WTC11 (cell line): ENCODE measurements at regions of chr3 and their contacts with region 1.

Region 1: GRCh38 chr3:46909535-46910442 is 32.3 kb downstream of the PTH1R start:
- DNase-seq: peak; percentile 94
- ATAC-seq: peak; percentile 87
- H3K4me3 Mint-ChIP-seq: no peak overlapping the region
- H3K27ac Mint-ChIP-seq: no peak overlapping the region
- H3K4me1 Mint-ChIP-seq: no peaks in the 10 kb centered on the region
- H3K27me3 Mint-ChIP-seq: no peaks in the 10 kb centered on the region
- CTCF ChIP-seq: peak; percentile 85

Region 2: GRCh38 chr3:46663591-46664135 is 246.1 kb before region 1 on chr3:
- CTCF ChIA-PET with region 1: interaction called, 13 read pairs
- POLR2A ChIA-PET with region 1: no interaction called
- DNase-seq: peak; percentile 58
- ATAC-seq: peak; percentile 37
- H3K4me3 Mint-ChIP-seq: no peak overlapping the region
- H3K27ac Mint-ChIP-seq: no peak overlapping the region; the same call in 1 of the 2 replicates
- H3K4me1 Mint-ChIP-seq: peaks cover 54% of the 10 kb centered on the region
- H3K27me3 Mint-ChIP-seq: no peaks in the 10 kb centered on the region; the same call in 1 of the 2 replicates
- CTCF ChIP-seq: no peak

Region 3: GRCh38 chr3:46717447-46718231 is 192.2 kb before region 1 on chr3 and contains the start of gene PRSS50:
- CTCF ChIA-PET with region 1: interaction called, 15 read pairs
- POLR2A ChIA-PET with region 1: no interaction called
- DNase-seq: peak; percentile 86
- ATAC-seq: peak; percentile 94
- H3K4me3 Mint-ChIP-seq: no peak within 1 kb of the TSS
- H3K27ac Mint-ChIP-seq: no peak within 1 kb of the TSS
- H3K4me1 Mint-ChIP-seq: no peaks in the 10 kb centered on the region
- H3K27me3 Mint-ChIP-seq: no peaks in the 10 kb centered on the region
- CTCF ChIP-seq: peak; percentile 94
- total RNA-seq, gene PRSS50: 0.70 to 1.4 TPM (median 1.2 TPM) in 3 replicates

Region 4: GRCh38 chr3:46833346-46834300 is 76.2 kb before region 1 on chr3:
- CTCF ChIA-PET with region 1: no interaction called
- POLR2A ChIA-PET with region 1: no interaction called
- DNase-seq: no peak
- ATAC-seq: no peak
- H3K4me3 Mint-ChIP-seq: no peak overlapping the region
- H3K27ac Mint-ChIP-seq: no peak overlapping the region
- H3K4me1 Mint-ChIP-seq: no peaks in the 10 kb centered on the region
- H3K27me3 Mint-ChIP-seq: peaks cover 13% of the 10 kb centered on the region
- CTCF ChIP-seq: no peak

Region 5: DNA sequence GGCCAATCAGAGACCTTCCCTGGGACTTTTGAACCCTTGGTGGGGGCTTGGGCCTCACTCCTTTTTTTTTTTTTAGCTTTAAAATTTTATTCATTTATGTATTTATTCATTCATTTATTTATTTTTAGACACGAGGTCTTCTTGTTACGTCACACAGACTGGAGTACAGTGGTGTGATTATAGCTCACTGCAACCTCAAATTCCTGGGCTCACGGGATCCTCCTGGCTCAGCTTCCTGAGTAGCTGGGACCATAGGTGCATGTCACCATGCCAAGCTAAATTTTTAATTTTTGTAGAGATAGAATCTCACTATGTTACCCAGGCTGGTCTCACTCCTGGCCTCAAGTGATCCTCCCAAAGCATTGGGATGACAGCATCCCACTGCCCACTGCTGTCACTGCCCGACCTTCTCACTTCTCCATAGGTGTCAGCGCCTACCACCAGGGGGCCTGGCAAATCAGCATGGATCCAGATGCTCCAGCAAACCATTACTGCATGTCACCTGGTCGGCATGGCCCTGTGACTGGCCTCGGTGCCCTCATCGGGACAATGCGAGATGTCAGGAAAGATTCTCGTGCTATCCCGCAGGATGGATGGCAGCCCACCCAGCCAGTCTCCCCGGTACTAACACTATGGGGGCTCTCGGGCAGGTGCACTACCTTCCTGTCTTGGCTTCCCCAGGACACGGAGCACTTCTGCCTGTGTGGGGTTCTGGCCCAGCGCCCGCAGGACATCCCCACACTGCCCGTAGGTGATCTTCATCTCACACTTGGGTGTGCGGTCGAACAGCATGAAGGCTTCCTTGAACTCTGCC is 49.6 kb before region 1 on chr3:
- CTCF ChIA-PET with region 1: interaction called, 39 read pairs
- POLR2A ChIA-PET with region 1: no interaction called
- DNase-seq: peak; percentile 53
- ATAC-seq: peak; percentile 33; the same call in 1 of the 2 replicates
- H3K4me3 Mint-ChIP-seq: no peak overlapping the region
- H3K27ac Mint-ChIP-seq: no peak overlapping the region
- H3K4me1 Mint-ChIP-seq: no peaks in the 10 kb centered on the region
- H3K27me3 Mint-ChIP-seq: peaks cover 3% of the 10 kb centered on the region; the same call in 1 of the 2 replicates
- CTCF ChIP-seq: 0 out of 2 replicates have a peak, but pooled peaks have one; percentile 17

Region 6: DNA sequence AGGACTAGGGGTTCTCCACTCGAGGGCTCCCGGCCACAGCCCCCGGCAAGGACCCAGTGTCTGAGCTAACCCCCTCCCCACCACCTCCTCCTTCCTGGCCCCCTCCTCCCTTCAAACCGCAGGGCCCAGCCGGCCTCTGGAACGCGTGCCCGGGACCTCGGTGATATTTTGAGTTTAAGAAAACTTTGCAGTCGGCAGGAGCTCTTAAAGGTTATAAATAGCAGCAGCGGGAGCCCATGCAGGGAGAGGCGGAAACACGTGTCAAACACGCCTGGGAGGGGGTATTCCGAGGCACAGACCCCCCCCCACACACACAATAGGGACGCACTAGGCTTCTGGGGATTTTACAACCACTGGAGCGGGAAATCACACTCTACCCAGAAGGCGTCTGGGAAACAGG is 35.4 kb before region 1 on chr3:
- CTCF ChIA-PET with region 1: interaction called, 39 read pairs
- POLR2A ChIA-PET with region 1: interaction called, 3 read pairs
- DNase-seq: no peak
- ATAC-seq: no peak
- H3K4me3 Mint-ChIP-seq: no peak overlapping the region
- H3K27ac Mint-ChIP-seq: no peak overlapping the region
- H3K4me1 Mint-ChIP-seq: 0 out of 2 replicates have a peak, but pooled peaks cover 3% of the 10 kb centered on the region
- H3K27me3 Mint-ChIP-seq: peaks cover 52% of the 10 kb centered on the region
- CTCF ChIP-seq: no peak

Region 7: DNA sequence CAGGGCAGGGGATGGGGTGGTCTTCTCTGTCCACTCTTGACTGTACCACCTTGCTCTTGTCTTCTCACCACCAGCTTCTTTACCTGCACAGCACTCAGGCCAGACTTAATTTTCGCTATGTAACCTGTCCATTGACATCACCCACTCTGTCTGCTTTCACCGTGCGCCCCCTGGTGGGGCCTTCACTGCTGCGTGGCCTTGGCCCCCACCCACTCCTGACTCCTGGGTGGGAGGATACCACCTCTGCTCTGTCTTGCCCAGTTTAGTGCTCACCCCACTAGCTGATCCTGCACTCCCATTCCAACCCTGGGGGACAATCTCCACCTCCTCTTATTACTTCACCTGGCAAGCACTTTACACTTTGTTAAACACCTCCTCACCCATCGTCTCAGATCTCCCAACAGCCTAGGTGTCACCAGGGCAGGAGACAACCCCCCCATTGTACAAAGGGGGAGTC is 14.6 kb before region 1 on chr3:
- CTCF ChIA-PET with region 1: interaction called, 41 read pairs
- POLR2A ChIA-PET with region 1: no interaction called
- DNase-seq: peak; percentile 63
- ATAC-seq: no peak
- H3K4me3 Mint-ChIP-seq: no peak overlapping the region
- H3K27ac Mint-ChIP-seq: no peak overlapping the region
- H3K4me1 Mint-ChIP-seq: peaks cover 11% of the 10 kb centered on the region
- H3K27me3 Mint-ChIP-seq: peaks cover 73% of the 10 kb centered on the region
- CTCF ChIP-seq: peak; percentile 52

Region 8: DNA sequence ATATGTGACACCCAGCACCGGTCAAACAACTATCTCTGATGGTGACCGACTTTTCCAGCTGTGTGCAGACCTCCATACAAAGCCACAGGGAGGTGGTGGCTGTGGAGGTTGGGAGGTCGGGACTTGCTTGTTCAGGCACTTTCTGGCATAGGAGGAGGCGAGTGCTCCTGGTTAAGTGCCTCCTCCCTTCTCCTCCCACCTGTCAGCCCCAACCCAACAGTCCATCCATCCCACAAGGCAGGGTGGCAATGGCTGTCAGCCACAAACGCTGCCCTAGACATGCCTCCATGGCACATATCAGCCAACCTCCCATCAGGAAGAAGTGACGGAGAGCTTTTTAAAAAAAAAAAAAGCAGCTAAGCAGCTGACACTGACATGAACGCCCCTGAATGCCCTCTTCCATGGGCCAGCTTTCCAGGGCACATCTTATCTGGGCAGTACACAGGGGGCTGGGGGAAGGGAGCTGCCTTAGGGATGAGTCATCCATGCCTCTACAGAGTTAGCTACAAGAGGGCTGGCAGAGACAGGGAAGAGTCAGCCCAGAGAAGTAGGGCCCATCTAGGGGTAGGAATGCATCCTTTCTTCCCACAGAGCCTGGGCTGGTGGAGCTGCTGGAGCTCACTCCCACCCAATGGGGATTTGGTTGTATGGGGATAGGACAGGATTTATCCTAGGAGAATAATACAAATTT is 25.5 kb after region 1 on chr3:
- CTCF ChIA-PET with region 1: interaction called, 12 read pairs
- POLR2A ChIA-PET with region 1: no interaction called
- DNase-seq: peak; percentile 62
- ATAC-seq: peak; percentile 95
- H3K4me3 Mint-ChIP-seq: no peak overlapping the region
- H3K27ac Mint-ChIP-seq: peak overlapping the region; percentile 91; the same call in 1 of the 2 replicates
- H3K4me1 Mint-ChIP-seq: peaks cover 31% of the 10 kb centered on the region
- H3K27me3 Mint-ChIP-seq: no peaks in the 10 kb centered on the region
- CTCF ChIP-seq: no peak